A673 (cell line): ENCODE measurements at regions of chr2 and their contacts with region 1.

Region 1: DNA sequence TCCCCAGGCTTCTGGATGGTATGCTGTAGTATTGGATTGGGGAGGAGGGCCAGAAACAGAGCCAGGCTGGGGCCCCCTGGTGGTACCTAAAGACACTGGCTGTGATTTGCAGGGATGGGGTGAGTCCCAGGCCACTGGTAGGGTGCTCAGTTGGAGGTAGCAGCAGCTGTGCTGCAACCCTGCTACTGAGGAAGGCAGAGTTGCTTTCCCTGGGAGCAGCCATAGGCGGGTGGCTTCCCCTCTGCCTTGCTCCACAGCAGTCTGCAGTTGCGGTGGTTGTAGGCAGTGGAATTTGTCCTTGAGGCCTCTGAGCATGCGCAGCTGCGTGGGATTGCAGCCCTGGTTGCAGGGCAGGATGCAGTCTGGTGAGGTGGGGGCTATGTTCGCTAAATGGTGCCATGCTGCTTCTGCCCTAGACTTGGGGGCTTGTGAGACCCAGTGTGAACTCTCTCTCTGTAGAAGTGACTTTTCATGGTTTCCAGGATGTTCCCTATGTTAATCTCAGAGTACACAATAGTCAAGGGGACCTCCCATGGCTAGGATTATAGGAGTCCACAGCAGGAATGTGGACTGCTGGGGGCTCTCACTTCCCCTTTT is 443.5 kb downstream of the XIRP2 start:
- DNase-seq: peak; percentile 76
- H3K4me3 ChIP-seq: no peak overlapping the region
- H3K27ac ChIP-seq: peak overlapping the region; percentile 70
- H3K4me1 ChIP-seq: peaks cover 36% of the 10 kb centered on the region
- H3K27me3 ChIP-seq: no peaks in the 10 kb centered on the region
- CTCF ChIP-seq: peak; percentile 58

Region 2: GRCh38 chr2:167264380-167264779 is 67.4 kb before region 1 on chr2:
- CTCF ChIA-PET with region 1: no interaction called
- POLR2A ChIA-PET with region 1: no interaction called
- intact Hi-C with region 1: no loop called
- DNase-seq: peak; percentile 49
- H3K4me3 ChIP-seq: no peak overlapping the region
- H3K27ac ChIP-seq: no peak overlapping the region
- H3K4me1 ChIP-seq: no peaks in the 10 kb centered on the region
- H3K27me3 ChIP-seq: no peaks in the 10 kb centered on the region
- CTCF ChIP-seq: peak; percentile 68

Region 3: DNA sequence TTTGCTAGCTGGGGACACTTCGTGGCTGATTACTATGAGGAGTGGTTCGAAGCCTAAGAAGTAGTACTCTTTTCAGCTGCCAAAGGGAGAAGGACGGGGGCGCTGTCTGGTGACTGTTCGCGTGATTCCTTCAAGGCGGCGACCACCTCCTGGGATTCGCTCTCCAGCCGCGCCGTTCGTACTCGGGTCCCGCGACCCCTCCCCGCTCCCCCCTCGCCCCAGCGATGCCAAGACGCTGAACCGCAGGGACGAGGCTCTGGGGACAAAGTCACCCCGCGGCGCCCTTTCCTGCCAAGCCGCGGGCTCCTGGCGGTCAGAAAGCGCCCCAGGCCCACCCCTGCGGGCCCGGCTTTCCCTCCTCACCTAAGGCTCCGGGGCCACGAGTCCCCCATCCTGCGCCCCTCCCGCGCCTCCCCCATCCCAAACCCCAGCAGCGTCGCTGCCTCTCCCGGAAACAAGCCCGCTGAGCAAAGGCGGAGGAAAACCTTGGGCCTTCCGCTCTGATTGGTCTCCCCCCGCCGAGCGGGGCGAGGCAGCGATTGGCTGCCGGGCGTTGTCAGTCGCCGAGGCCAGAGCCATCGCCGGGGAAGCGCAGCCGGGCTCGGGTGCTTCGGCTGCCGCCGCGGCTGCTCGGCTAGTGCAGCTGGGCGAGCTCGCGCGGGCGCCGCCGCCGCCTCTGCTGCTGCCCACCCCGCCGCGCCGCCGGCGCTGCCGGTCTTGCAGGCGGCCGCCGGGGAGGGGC is 39.1 kb before region 1 on chr2:
- CTCF ChIA-PET with region 1: interaction called, 3 read pairs
- POLR2A ChIA-PET with region 1: no interaction called
- intact Hi-C with region 1: loop called (anchors 5 kb)
- DNase-seq: peak; percentile 96
- H3K4me3 ChIP-seq: peak within 1 kb of the TSS; percentile 72
- H3K27ac ChIP-seq: peak within 1 kb of the TSS; percentile 82
- H3K4me1 ChIP-seq: peaks cover 15% of the 10 kb centered on the region
- H3K27me3 ChIP-seq: no peaks in the 10 kb centered on the region
- CTCF ChIP-seq: peak; percentile 55